ENCODE measurements at regions of chr7 and their contacts with region 1.

Region 1: GRCh38 chr7:28096713-28097112 is 83.9 kb downstream of the JAZF1 start:
- DNase-seq: peak; percentile 52 to 64
- H3K4me3 ChIP-seq: no peak overlapping the region
- H3K27ac ChIP-seq: no peak overlapping the region
- H3K4me1 ChIP-seq: 0 out of 2 replicates have a peak, but pooled peaks cover 3% of the 10 kb centered on the region
- H3K27me3 ChIP-seq: no peaks in the 10 kb centered on the region
- CTCF ChIP-seq: peak; percentile 98

Region 2: DNA sequence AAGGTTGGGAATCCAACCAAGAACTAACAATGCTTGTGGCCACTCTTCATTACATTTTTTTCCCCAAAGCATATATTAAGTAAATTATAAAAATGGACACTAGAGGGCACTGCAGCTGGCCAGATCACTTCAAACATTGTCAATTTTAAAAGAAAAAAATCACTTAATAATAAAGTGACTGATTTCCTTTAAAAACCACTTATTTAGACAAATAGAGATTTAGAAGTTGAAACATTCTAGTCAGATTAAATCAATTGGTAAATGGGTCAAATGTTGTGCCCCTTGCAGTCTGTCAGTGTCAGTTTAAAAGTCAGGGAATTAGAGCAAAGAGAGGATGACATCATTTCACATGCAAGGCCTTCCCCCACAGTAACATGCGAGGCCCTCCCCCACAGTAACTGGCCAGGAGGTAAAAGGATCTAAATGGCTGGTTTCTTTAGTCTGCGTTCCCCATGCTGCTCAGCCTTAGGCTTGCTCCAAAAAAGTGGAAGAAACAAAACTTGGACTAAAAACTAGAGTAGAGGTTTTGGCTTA is 1410.2 kb before region 1 on chr7:
- CTCF ChIA-PET with region 1: interaction called, 3 read pairs
- POLR2A ChIA-PET with region 1: no interaction called
- intact Hi-C with region 1: loop called (anchors 1 kb)
- DNase-seq: peak in 1 of 2 experiments; percentile 7
- H3K4me3 ChIP-seq: no peak overlapping the region
- H3K27ac ChIP-seq: no peak overlapping the region
- H3K4me1 ChIP-seq: no peaks in the 10 kb centered on the region
- H3K27me3 ChIP-seq: no peaks in the 10 kb centered on the region
- CTCF ChIP-seq: peak; percentile 94

Region 3: GRCh38 chr7:27196287-27196767 is 900.4 kb before region 1 on chr7:
- CTCF ChIA-PET with region 1: interaction called, 23 read pairs
- POLR2A ChIA-PET with region 1: interaction called, 3 read pairs
- intact Hi-C with region 1: loop called (anchors 1 kb)
- DNase-seq: peak; percentile 59 to 76
- H3K4me3 ChIP-seq: no peak overlapping the region
- H3K27ac ChIP-seq: no peak overlapping the region
- H3K4me1 ChIP-seq: no peaks in the 10 kb centered on the region
- H3K27me3 ChIP-seq: peaks cover 13% of the 10 kb centered on the region; the same call in 1 of the 2 replicates
- CTCF ChIP-seq: peak; percentile 99

Region 4: DNA sequence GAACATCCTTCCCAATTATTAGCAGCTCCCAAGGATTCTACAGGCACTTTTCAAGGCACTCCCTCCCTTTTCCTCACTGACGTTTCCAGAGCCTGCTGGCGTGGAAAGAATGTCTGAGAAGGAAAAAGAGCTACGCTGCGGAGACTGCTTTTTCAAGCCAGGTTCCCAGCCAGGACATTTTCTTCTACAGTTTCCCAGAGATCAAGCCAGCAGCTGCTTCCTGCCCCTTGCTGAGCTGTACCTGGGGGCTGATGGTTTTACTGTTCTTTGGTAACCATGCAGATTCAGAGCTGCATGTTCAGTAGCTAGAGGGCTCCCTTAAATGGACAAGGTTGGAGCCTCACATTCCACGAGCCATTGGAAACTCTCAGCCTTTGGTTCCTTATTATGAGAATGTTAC is 720.8 kb before region 1 on chr7:
- CTCF ChIA-PET with region 1: no interaction called
- POLR2A ChIA-PET with region 1: no interaction called
- intact Hi-C with region 1: loop called (anchors 2 kb)
- DNase-seq: no peak
- H3K4me3 ChIP-seq: no peak overlapping the region
- H3K27ac ChIP-seq: no peak overlapping the region
- H3K4me1 ChIP-seq: peaks cover 24% of the 10 kb centered on the region
- H3K27me3 ChIP-seq: no peaks in the 10 kb centered on the region
- CTCF ChIP-seq: no peak

Region 5: GRCh38 chr7:27576360-27576944 is 520.3 kb before region 1 on chr7:
- CTCF ChIA-PET with region 1: interaction called, 4 read pairs
- POLR2A ChIA-PET with region 1: no interaction called
- intact Hi-C with region 1: loop called (anchors 5 kb)
- DNase-seq: no peak
- H3K4me3 ChIP-seq: no peak overlapping the region
- H3K27ac ChIP-seq: no peak overlapping the region
- H3K4me1 ChIP-seq: no peaks in the 10 kb centered on the region
- H3K27me3 ChIP-seq: no peaks in the 10 kb centered on the region
- CTCF ChIP-seq: peak; percentile 91

Region 6: GRCh38 chr7:27784393-27785053 is 312.2 kb before region 1 on chr7:
- CTCF ChIA-PET with region 1: no interaction called
- POLR2A ChIA-PET with region 1: no interaction called
- intact Hi-C with region 1: loop called (anchors 5 kb)
- DNase-seq: peak; percentile 53 to 98
- H3K4me3 ChIP-seq: no peak overlapping the region
- H3K27ac ChIP-seq: no peak overlapping the region
- H3K4me1 ChIP-seq: peaks cover 25% of the 10 kb centered on the region
- H3K27me3 ChIP-seq: no peaks in the 10 kb centered on the region
- CTCF ChIP-seq: peak; percentile 92

Region 7: GRCh38 chr7:28062197-28062991 is 34.3 kb before region 1 on chr7:
- CTCF ChIA-PET with region 1: interaction called, 32 read pairs
- POLR2A ChIA-PET with region 1: no interaction called
- intact Hi-C with region 1: no loop called
- DNase-seq: peak; percentile 57 to 87
- H3K4me3 ChIP-seq: no peak overlapping the region
- H3K27ac ChIP-seq: peak overlapping the region; percentile 6
- H3K4me1 ChIP-seq: peaks cover 34% of the 10 kb centered on the region
- H3K27me3 ChIP-seq: no peaks in the 10 kb centered on the region
- CTCF ChIP-seq: peak; percentile 75

Region 8: DNA sequence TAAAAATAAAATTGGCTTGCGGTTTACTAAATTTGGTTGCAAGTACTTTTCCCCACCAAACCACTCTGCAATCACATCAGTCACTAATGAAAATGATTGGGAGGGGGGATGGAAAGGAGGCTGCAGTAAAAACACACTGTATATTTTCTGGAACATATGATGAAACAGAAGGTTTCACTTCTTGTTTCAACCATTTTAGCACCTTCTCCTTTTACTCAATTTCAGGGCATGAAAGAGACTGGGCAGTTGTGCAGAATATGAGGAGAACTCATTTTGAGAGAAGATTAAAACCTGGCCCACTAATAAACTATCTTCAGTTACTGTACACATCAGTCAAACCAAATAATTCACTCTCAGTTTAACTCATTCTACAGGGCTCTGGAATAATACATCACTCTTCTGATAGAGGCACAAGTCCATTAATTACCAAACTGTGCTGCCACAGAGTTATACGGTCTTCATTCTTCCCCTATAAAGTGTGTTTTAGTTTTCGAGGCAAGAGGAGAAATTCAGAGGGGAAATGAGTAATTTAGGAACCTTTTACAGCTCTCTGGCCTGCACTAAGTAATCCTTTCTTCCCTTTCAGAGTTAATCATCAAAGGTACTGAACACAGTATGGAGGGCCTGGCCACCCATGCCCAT is 58.4 kb after region 1 on chr7:
- CTCF ChIA-PET with region 1: no interaction called
- POLR2A ChIA-PET with region 1: no interaction called
- intact Hi-C with region 1: no loop called
- DNase-seq: no peak
- H3K4me3 ChIP-seq: no peak overlapping the region
- H3K27ac ChIP-seq: no peak overlapping the region
- H3K4me1 ChIP-seq: peaks cover 24% of the 10 kb centered on the region
- H3K27me3 ChIP-seq: no peaks in the 10 kb centered on the region
- CTCF ChIP-seq: no peak

Region 9: GRCh38 chr7:28169230-28169629 is 72.5 kb after region 1 on chr7:
- CTCF ChIA-PET with region 1: no interaction called
- POLR2A ChIA-PET with region 1: no interaction called
- intact Hi-C with region 1: no loop called
- DNase-seq: peak in 1 of 2 experiments; percentile 61
- H3K4me3 ChIP-seq: no peak overlapping the region
- H3K27ac ChIP-seq: no peak overlapping the region
- H3K4me1 ChIP-seq: peaks cover 14% of the 10 kb centered on the region
- H3K27me3 ChIP-seq: no peaks in the 10 kb centered on the region
- CTCF ChIP-seq: no peak

Region 10: DNA sequence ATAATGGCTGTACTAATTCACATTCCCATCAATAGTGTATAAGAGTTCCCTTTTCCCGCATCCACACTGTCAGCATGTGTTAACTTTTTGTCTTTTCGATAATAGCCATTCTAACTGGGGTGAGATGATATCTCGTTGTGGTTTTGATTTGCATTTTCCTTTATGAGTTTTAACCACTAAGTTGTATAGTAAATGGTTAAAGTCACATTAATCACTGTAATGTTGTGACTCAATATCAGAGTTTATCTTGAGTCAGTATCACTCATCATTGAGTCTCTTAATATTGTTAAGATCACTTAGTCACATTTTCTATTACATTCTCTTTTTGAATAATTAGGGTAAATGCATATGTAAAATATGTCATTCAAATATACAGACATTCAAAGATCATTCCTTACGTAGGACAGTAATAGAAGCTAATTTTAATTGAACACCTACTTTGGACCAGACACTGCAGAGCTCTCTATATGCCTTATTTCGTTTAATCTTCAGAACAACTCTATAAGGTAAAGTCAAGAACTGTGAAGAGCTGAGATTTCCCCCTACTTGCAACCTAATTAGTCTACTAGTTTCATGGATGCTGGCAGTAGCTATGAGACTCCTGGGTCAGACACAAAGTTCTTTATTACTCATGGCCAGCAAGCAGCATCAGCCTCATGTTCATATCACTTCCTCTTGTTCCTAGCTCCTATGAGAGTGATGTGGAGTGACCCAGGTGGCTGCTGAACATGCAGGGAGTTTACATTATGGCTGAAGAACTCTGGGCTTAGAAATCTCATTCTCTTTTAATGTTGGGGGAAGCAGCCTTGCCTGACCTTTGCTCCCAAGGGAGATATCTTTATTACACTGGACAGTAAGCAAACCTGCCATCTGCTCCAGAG is 346.1 kb after region 1 on chr7:
- CTCF ChIA-PET with region 1: no interaction called
- POLR2A ChIA-PET with region 1: no interaction called
- intact Hi-C with region 1: no loop called
- DNase-seq: no peak
- H3K4me3 ChIP-seq: no peak overlapping the region
- H3K27ac ChIP-seq: no peak overlapping the region
- H3K4me1 ChIP-seq: no peaks in the 10 kb centered on the region
- H3K27me3 ChIP-seq: 0 out of 2 replicates have a peak, but pooled peaks cover 9% of the 10 kb centered on the region
- CTCF ChIP-seq: no peak

Region 11: DNA sequence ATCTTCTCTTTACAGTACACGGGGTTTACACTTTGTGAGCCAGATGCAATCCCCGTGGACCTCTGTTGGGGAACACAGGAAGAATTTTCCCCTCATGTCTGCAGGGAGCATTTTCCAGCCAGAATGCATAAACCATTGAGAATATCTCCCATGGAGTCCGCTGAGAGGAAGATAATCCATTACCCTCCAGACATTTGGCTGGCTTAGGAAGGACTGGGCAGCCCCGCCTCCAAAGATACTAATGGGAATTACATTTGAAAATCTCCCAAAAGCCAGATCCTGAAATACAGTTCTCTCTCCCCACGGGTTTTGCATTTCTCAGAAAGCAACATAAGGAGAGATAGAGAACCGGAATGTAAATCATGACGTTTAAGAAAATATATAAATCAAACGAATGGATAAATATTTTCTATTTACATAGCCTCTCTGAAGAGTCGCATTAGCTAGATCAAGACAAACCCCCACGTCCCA is 807.9 kb after region 1 on chr7:
- CTCF ChIA-PET with region 1: no interaction called
- POLR2A ChIA-PET with region 1: no interaction called
- intact Hi-C with region 1: no loop called
- DNase-seq: no peak
- H3K4me3 ChIP-seq: peak overlapping the region; percentile 11; the same call in 1 of the 2 replicates
- H3K27ac ChIP-seq: no peak overlapping the region
- H3K4me1 ChIP-seq: no peaks in the 10 kb centered on the region
- H3K27me3 ChIP-seq: no peaks in the 10 kb centered on the region
- CTCF ChIP-seq: no peak

Measured in PC-9 (cell line).